GM12878 (cell line): ENCODE measurements at regions of chr15 and their contacts with region 1.

Region 1: DNA sequence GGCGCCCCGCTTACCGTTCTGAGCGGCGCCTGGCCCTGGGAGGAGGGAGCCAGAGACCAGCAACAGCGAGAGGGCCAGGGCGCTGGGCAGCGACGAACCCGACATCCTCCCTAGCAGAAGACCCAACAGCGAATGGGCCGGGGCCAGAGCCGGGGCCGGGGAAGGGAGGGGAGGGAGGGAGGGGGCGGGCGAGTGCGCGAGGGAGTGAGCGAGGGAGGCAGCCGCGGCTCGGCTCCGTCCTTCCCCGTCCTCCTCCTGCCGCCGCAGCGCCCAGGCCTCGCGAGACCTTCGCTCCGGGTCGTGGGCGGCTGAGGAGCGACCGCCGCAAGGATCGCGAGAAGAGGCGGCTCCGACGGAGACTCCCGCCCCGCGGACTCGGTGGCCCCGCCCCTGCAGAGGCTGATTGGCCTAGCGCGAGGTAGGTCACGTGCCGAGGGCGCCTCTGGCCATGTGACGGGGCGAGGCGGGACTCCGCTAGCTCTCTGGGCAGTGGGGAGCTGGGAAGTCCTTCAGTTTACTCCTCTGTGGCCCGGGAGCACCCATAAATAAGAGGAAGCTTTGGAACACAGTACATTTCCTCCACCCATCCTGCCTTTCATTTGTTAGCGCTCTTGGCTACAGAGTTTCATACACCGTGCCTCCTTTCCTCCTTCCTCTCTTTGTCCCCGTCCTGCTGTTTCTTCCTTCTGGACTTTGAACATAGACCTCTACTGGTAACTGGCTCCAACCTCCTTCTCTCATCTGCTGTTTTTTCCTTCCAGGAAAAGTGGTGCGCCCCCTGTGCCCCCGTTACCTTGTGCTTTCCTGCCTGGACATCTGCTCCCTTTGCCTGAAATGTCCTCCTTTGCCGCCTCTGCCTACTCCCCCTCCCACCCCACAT is at the start of gene NPTN:
- DNase-seq: peak; percentile 84
- ATAC-seq: peak; percentile 93
- H3K4me3 ChIP-seq: peak within 1 kb of the TSS; percentile 92
- H3K27ac ChIP-seq: peak within 1 kb of the TSS; percentile 66
- H3K4me1 ChIP-seq: peaks cover 18% of the 10 kb centered on the region
- H3K27me3 ChIP-seq: no peaks in the 10 kb centered on the region
- CTCF ChIP-seq: no peak
- EP300 ChIP-seq: no peak
- POLR2A ChIP-seq: peak; percentile 84
- RAD21 ChIP-seq: no peak
- polyA plus RNA-seq, gene NPTN: 17.8 to 21.9 TPM

Region 2: GRCh38 chr15:73555080-73555479 is 78.3 kb before region 1 on chr15:
- CTCF ChIA-PET with region 1: interaction called, 250 read pairs
- POLR2A ChIA-PET with region 1: interaction called, 8 read pairs
- RAD21 ChIA-PET with region 1: interaction called, 86 read pairs
- SMC1A ChIA-PET with region 1: interaction called, 39 read pairs
- in situ Hi-C with region 1: loop called (anchors 5 kb)
- intact Hi-C with region 1: loop called (anchors 1 kb)
- DNase-seq: no peak
- ATAC-seq: no peak
- H3K4me3 ChIP-seq: no peak overlapping the region
- H3K27ac ChIP-seq: no peak overlapping the region
- H3K4me1 ChIP-seq: no peaks in the 10 kb centered on the region
- H3K27me3 ChIP-seq: no peaks in the 10 kb centered on the region
- CTCF ChIP-seq: no peak
- EP300 ChIP-seq: no peak
- POLR2A ChIP-seq: no peak
- RAD21 ChIP-seq: no peak

Region 3: GRCh38 chr15:73593304-73594074 is 39.9 kb before region 1 on chr15:
- CTCF ChIA-PET with region 1: interaction called, 30 read pairs
- POLR2A ChIA-PET with region 1: no interaction called
- RAD21 ChIA-PET with region 1: interaction called, 6 read pairs
- SMC1A ChIA-PET with region 1: interaction called, 12 read pairs
- in situ Hi-C with region 1: no loop called
- intact Hi-C with region 1: no loop called
- DNase-seq: no peak
- ATAC-seq: no peak
- H3K4me3 ChIP-seq: no peak overlapping the region
- H3K27ac ChIP-seq: no peak overlapping the region
- H3K4me1 ChIP-seq: peaks cover 3% of the 10 kb centered on the region; the same call in 1 of the 2 replicates
- H3K27me3 ChIP-seq: no peaks in the 10 kb centered on the region
- CTCF ChIP-seq: no peak
- EP300 ChIP-seq: no peak
- POLR2A ChIP-seq: no peak
- RAD21 ChIP-seq: no peak

Region 4: GRCh38 chr15:73617301-73617831 is 16.0 kb before region 1 on chr15:
- CTCF ChIA-PET with region 1: interaction called, 197 read pairs
- POLR2A ChIA-PET with region 1: interaction called, 12 read pairs
- RAD21 ChIA-PET with region 1: interaction called, 16 read pairs
- SMC1A ChIA-PET with region 1: interaction called, 38 read pairs
- in situ Hi-C with region 1: no loop called
- intact Hi-C with region 1: no loop called
- DNase-seq: no peak
- ATAC-seq: no peak
- H3K4me3 ChIP-seq: no peak overlapping the region
- H3K27ac ChIP-seq: no peak overlapping the region
- H3K4me1 ChIP-seq: 0 out of 2 replicates have a peak, but pooled peaks cover 7% of the 10 kb centered on the region
- H3K27me3 ChIP-seq: no peaks in the 10 kb centered on the region
- CTCF ChIP-seq: no peak
- EP300 ChIP-seq: no peak
- POLR2A ChIP-seq: no peak
- RAD21 ChIP-seq: no peak

Region 5: GRCh38 chr15:73697033-73697467 is 63.7 kb after region 1 on chr15:
- CTCF ChIA-PET with region 1: interaction called, 216 read pairs
- POLR2A ChIA-PET with region 1: no interaction called
- RAD21 ChIA-PET with region 1: interaction called, 27 read pairs
- SMC1A ChIA-PET with region 1: interaction called, 48 read pairs
- in situ Hi-C with region 1: loop called (anchors 5 kb)
- intact Hi-C with region 1: loop called (anchors 1 kb)
- DNase-seq: peak; percentile 38
- ATAC-seq: peak; percentile 93
- H3K4me3 ChIP-seq: no peak overlapping the region
- H3K27ac ChIP-seq: peak overlapping the region; percentile 4; the same call in 1 of the 2 replicates
- H3K4me1 ChIP-seq: peaks cover 10% of the 10 kb centered on the region
- H3K27me3 ChIP-seq: no peaks in the 10 kb centered on the region
- CTCF ChIP-seq: no peak
- EP300 ChIP-seq: peak in 1 of 2 experiments; percentile 17; a peak in 1 of 4 replicates
- POLR2A ChIP-seq: no peak
- RAD21 ChIP-seq: no peak

Region 6: GRCh38 chr15:73732930-73733329 is 99.6 kb after region 1 on chr15:
- CTCF ChIA-PET with region 1: no interaction called
- POLR2A ChIA-PET with region 1: no interaction called
- RAD21 ChIA-PET with region 1: no interaction called
- SMC1A ChIA-PET with region 1: no interaction called
- in situ Hi-C with region 1: no loop called
- intact Hi-C with region 1: no loop called
- DNase-seq: no peak
- ATAC-seq: no peak
- H3K4me3 ChIP-seq: no peak overlapping the region
- H3K27ac ChIP-seq: no peak overlapping the region
- H3K4me1 ChIP-seq: no peaks in the 10 kb centered on the region
- H3K27me3 ChIP-seq: no peaks in the 10 kb centered on the region; a peak in 1 of 4 replicates
- CTCF ChIP-seq: no peak
- EP300 ChIP-seq: no peak
- POLR2A ChIP-seq: no peak
- RAD21 ChIP-seq: no peak

Region 7: DNA sequence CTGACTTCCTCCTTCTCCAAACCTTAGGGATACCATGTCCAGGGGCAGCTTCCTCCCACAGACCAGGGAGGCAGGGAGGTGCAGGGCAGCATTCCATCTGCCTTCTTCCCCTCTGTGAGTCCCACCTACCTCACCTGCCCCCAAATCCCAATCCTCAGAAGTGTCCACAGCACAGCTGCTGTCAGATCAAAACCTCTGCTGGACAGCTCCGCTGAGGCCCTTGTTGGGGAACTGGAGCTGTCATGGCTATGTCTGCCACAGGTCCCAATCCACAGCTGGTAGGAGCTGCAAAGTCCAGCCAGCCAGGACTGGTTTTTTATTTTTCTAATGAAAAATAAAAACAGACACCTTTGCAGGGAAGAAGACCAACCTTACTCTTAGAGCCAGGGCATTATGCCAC is 199.3 kb after region 1 on chr15:
- CTCF ChIA-PET with region 1: no interaction called
- POLR2A ChIA-PET with region 1: no interaction called
- RAD21 ChIA-PET with region 1: no interaction called
- SMC1A ChIA-PET with region 1: no interaction called
- in situ Hi-C with region 1: no loop called
- intact Hi-C with region 1: no loop called
- DNase-seq: no peak
- ATAC-seq: no peak
- H3K4me3 ChIP-seq: no peak overlapping the region
- H3K27ac ChIP-seq: no peak overlapping the region
- H3K4me1 ChIP-seq: no peaks in the 10 kb centered on the region
- H3K27me3 ChIP-seq: peaks cover 1 to 5% of the 10 kb centered on the region in 2 experiments; a peak in 3 of 4 replicates
- CTCF ChIP-seq: no peak
- EP300 ChIP-seq: no peak
- POLR2A ChIP-seq: no peak
- RAD21 ChIP-seq: no peak